T-cell (primary cell): ENCODE measurements at regions of chr6 and their contacts with region 1.

Region 1: GRCh38 chr6:152552616-152553209 is 84.4 kb downstream of the SYNE1 start:
- DNase-seq: peak in 21 of 35 experiments; percentile 2 to 65 (median 14)
- ATAC-seq: no peak
- H3K4me3 ChIP-seq: no peak overlapping the region
- H3K4me3 Mint-ChIP-seq: no peak overlapping the region
- H3K27ac ChIP-seq: no peak overlapping the region
- H3K27ac Mint-ChIP-seq: no peak overlapping the region
- H3K4me1 ChIP-seq: peaks cover 0 to 2% of the 10 kb centered on the region in 2 experiments
- H3K4me1 Mint-ChIP-seq: no peaks in the 10 kb centered on the region
- H3K27me3 ChIP-seq: no peaks in the 10 kb centered on the region
- H3K27me3 Mint-ChIP-seq: peaks cover 6 to 17% of the 10 kb centered on the region in 2 donors

Region 2: GRCh38 chr6:152508477-152508876 is 44.2 kb before region 1 on chr6:
- CTCF ChIA-PET with region 1: no interaction called
- POLR2A ChIA-PET with region 1: interaction called in 1 of 2 experiments, 10 read pairs
- DNase-seq: no peak
- ATAC-seq: no peak
- H3K4me3 ChIP-seq: no peak overlapping the region
- H3K4me3 Mint-ChIP-seq: no peak overlapping the region
- H3K27ac ChIP-seq: no peak overlapping the region
- H3K27ac Mint-ChIP-seq: no peak overlapping the region
- H3K4me1 ChIP-seq: no peaks in the 10 kb centered on the region
- H3K4me1 Mint-ChIP-seq: no peaks in the 10 kb centered on the region
- H3K27me3 ChIP-seq: no peaks in the 10 kb centered on the region
- H3K27me3 Mint-ChIP-seq: peaks cover 0 to 4% of the 10 kb centered on the region in 2 donors

Region 3: DNA sequence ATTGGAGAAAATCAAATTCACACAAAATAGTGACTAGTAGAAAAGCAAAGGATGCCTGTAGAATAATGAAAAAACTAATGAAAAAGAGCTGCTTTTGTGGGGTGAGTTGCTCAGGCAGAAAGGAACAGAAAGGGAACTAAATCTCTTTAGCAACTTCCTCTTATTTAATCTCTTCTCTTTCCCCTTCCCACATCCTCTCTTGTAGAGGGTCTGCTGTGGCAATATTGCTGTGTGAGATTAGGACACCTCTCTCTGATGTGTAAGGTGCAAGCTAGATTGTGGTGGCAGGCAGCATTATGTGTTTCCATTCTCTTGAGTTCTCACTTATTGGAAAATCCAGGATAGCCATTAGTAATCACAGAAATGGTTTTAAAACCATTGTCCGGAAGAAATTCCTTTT is 34.8 kb after region 1 on chr6:
- CTCF ChIA-PET with region 1: no interaction called
- POLR2A ChIA-PET with region 1: no interaction called
- DNase-seq: no peak
- ATAC-seq: no peak
- H3K4me3 ChIP-seq: no peak overlapping the region
- H3K4me3 Mint-ChIP-seq: no peak overlapping the region
- H3K27ac ChIP-seq: no peak overlapping the region
- H3K27ac Mint-ChIP-seq: no peak overlapping the region
- H3K4me1 ChIP-seq: no peaks in the 10 kb centered on the region
- H3K4me1 Mint-ChIP-seq: no peaks in the 10 kb centered on the region
- H3K27me3 ChIP-seq: no peaks in the 10 kb centered on the region
- H3K27me3 Mint-ChIP-seq: peaks cover 0 to 3% of the 10 kb centered on the region in 2 donors

Region 4: DNA sequence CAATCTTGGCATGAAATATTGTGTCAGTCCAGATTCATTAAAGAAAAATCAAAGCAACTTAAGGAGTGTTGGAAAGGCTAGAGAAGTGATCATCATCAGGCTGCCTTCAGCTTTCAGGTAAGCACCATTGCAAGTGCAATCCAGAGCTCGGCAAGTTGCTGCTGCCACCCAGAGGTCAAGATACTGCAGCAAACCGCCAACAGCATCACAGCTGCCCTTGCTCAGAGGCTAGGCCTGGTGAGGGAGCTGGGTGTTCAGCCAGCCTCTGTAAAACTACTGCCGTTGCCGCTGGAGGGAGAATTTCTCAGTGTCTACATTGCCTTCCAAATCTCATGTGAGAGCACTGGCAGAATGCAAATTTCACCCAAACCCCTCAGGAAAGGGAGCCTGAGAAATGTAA is 90.3 kb after region 1 on chr6:
- CTCF ChIA-PET with region 1: interaction called in 1 of 2 experiments, 19 read pairs
- POLR2A ChIA-PET with region 1: no interaction called
- DNase-seq: peak in 25 of 35 experiments; percentile 5 to 68 (median 22)
- ATAC-seq: peak in 3 of 4 experiments; percentile 20 to 52 (median 34)
- H3K4me3 ChIP-seq: no peak overlapping the region
- H3K4me3 Mint-ChIP-seq: no peak overlapping the region
- H3K27ac ChIP-seq: no peak overlapping the region
- H3K27ac Mint-ChIP-seq: no peak overlapping the region
- H3K4me1 ChIP-seq: no peaks in the 10 kb centered on the region
- H3K4me1 Mint-ChIP-seq: peaks cover under 1 to 3% (median 1%) of the 10 kb centered on the region in 3 donors
- H3K27me3 ChIP-seq: peaks cover 3 to 12% of the 10 kb centered on the region in 2 experiments
- H3K27me3 Mint-ChIP-seq: peaks cover 2 to 11% of the 10 kb centered on the region in 2 donors

Region 5: DNA sequence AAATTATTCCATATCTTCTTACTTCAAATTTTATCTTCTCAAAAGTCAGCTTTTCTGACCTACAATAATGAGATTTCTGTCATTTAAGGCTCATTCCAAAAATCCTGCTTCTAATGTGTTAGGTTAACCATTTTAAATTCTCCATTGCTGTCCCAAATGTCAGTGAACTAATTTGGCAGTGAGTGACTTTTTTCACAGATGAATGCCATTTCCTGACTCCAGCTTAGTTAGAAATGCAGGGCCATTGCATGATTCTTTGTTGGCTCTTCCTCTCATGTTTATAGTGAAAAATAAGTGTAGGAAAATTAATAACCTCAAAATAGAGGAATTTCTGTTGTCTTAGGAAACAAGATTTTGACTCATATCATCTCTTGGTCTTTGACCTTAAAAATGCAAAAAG is 242.0 kb after region 1 on chr6:
- CTCF ChIA-PET with region 1: no interaction called
- POLR2A ChIA-PET with region 1: no interaction called
- DNase-seq: no peak
- ATAC-seq: no peak
- H3K4me3 ChIP-seq: no peak overlapping the region
- H3K4me3 Mint-ChIP-seq: no peak overlapping the region
- H3K27ac ChIP-seq: no peak overlapping the region
- H3K27ac Mint-ChIP-seq: no peak overlapping the region
- H3K4me1 ChIP-seq: no peaks in the 10 kb centered on the region
- H3K4me1 Mint-ChIP-seq: no peaks in the 10 kb centered on the region
- H3K27me3 ChIP-seq: no peaks in the 10 kb centered on the region
- H3K27me3 Mint-ChIP-seq: peaks cover 5 to 17% of the 10 kb centered on the region in 2 donors